Left ventricle myocardium inferior (tissue), 1 donor: ENCODE measurements at regions of chr7 and their contacts with region 1.

Region 1: DNA sequence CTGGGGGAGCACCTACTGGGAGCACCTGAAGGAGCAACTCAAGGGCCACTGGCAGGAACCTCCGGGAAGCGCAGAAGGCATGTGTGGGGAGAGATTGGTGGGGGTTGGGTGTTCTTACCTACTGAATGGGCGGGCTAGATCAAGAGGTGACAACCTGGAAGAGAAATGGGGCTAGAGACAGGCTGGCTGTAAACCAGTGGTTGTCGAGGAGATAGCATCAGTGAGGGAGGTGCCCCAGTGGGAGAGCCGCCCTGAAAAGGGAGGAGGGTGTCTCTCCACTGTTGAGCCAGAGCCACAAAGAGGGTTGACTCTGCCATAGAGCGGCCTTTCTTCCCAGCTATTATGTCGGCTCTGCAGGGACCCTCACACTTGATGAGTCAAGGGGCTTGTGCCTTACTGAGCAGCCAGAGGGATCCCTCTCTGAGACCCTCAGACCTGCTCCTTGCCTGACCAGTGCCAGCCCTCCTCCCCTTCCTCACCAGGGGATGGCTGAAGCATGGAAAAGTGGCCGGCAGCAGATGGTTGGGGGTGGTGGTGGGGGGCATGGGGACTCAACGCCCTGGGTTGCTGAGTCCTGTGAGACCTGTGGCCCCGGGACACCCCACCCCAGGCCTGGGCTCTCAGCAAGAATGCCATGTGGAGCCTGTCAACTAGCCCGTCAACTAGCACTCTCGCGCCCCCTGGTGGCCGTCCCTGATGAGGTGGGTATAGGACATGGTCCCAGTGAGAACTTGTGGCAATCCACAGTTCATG is 36.5 kb upstream of the PURB start:
- DNase-seq: peak; percentile 90
- H3K4me3 ChIP-seq: no peak overlapping the region
- H3K27ac ChIP-seq: no peak overlapping the region
- H3K4me1 ChIP-seq: peaks cover 4% of the 10 kb centered on the region
- H3K27me3 ChIP-seq: no peaks in the 10 kb centered on the region
- CTCF ChIP-seq: peak; percentile 92

Region 2: DNA sequence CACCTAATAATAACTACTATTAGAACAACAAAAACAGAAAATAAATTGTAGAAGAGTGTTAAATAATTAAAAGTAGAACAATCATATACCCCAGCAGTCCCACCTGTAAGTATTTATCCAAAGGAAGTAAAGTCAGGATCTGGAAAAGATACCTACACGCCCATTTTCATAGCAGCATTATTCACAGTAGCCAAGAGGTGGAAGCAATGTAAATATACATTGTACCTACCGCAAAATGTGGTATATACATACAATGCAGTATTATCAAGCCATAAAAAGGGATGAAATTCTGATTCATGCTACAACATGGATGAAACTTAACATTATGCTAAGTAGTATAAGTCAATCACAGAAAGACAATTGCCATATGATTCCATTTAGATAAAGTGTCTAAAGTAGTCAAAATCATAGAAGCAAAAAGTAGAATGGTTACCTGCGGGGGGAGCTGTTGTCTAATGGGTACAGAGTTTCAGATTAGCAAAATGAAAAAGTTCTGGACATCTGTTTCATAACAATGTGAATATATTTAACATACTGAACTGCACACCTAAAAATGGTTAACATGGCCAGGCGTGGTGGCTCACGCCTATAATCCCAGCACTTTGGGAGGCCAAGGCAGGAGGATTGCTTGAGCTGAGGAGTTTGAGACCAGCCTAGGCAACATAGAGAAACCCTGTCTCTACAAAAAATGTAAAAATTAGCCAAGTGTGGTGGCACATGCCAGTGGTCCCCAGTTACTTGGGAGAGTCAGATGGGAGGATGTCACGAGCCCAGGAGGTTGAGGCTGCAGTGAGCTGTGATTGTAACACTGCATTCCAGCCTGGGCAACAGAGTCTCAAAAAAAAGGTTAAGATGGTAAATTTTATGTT is 333.7 kb before region 1 on chr7:
- intact Hi-C with region 1: loop called (anchors 5 kb)
- DNase-seq: no peak
- H3K4me3 ChIP-seq: no peak overlapping the region
- H3K27ac ChIP-seq: peak overlapping the region; percentile 43
- H3K4me1 ChIP-seq: peaks cover 5% of the 10 kb centered on the region
- H3K27me3 ChIP-seq: no peaks in the 10 kb centered on the region
- CTCF ChIP-seq: peak; percentile 74

Region 3: GRCh38 chr7:44727158-44727933 is 194.4 kb before region 1 on chr7:
- intact Hi-C with region 1: no loop called
- DNase-seq: no peak
- H3K4me3 ChIP-seq: no peak overlapping the region
- H3K27ac ChIP-seq: no peak overlapping the region
- H3K4me1 ChIP-seq: peaks cover 5% of the 10 kb centered on the region
- H3K27me3 ChIP-seq: no peaks in the 10 kb centered on the region
- CTCF ChIP-seq: no peak

Region 4: GRCh38 chr7:44769776-44770662 is 151.8 kb before region 1 on chr7:
- intact Hi-C with region 1: no loop called
- DNase-seq: no peak
- H3K4me3 ChIP-seq: peak overlapping the region; percentile 7
- H3K27ac ChIP-seq: peak overlapping the region; percentile 81
- H3K4me1 ChIP-seq: peaks cover 41% of the 10 kb centered on the region
- H3K27me3 ChIP-seq: no peaks in the 10 kb centered on the region
- CTCF ChIP-seq: no peak

Region 5: GRCh38 chr7:45122975-45123860 is 201.4 kb after region 1 on chr7:
- intact Hi-C with region 1: no loop called
- DNase-seq: no peak
- H3K4me3 ChIP-seq: no peak overlapping the region
- H3K27ac ChIP-seq: no peak overlapping the region
- H3K4me1 ChIP-seq: no peaks in the 10 kb centered on the region
- H3K27me3 ChIP-seq: no peaks in the 10 kb centered on the region
- CTCF ChIP-seq: no peak